Heart left ventricle (tissue), 16 donors: ENCODE measurements at regions of chr3 and their contacts with region 1.

Region 1: GRCh38 chr3:127822698-127823425 is 547 bp upstream of the MGLL start:
- DNase-seq: peak; percentile 64 to 87 (median 76)
- ATAC-seq: peak; percentile 62 to 89 (median 81)
- H3K4me3 ChIP-seq: peak overlapping the region; percentile 67 to 99 (median 86)
- H3K27ac ChIP-seq: peak overlapping the region; percentile 75 to 97 (median 92)
- H3K4me1 ChIP-seq: peaks cover 0 to 46% (median 29%) of the 10 kb centered on the region in 12 donors
- H3K27me3 ChIP-seq: no peaks in the 10 kb centered on the region
- CTCF ChIP-seq: peak in 6 of 12 donors; percentile 31 to 54 (median 38)
- POLR2A ChIP-seq: peak in 1 of 2 donors; percentile 53

Region 2: DNA sequence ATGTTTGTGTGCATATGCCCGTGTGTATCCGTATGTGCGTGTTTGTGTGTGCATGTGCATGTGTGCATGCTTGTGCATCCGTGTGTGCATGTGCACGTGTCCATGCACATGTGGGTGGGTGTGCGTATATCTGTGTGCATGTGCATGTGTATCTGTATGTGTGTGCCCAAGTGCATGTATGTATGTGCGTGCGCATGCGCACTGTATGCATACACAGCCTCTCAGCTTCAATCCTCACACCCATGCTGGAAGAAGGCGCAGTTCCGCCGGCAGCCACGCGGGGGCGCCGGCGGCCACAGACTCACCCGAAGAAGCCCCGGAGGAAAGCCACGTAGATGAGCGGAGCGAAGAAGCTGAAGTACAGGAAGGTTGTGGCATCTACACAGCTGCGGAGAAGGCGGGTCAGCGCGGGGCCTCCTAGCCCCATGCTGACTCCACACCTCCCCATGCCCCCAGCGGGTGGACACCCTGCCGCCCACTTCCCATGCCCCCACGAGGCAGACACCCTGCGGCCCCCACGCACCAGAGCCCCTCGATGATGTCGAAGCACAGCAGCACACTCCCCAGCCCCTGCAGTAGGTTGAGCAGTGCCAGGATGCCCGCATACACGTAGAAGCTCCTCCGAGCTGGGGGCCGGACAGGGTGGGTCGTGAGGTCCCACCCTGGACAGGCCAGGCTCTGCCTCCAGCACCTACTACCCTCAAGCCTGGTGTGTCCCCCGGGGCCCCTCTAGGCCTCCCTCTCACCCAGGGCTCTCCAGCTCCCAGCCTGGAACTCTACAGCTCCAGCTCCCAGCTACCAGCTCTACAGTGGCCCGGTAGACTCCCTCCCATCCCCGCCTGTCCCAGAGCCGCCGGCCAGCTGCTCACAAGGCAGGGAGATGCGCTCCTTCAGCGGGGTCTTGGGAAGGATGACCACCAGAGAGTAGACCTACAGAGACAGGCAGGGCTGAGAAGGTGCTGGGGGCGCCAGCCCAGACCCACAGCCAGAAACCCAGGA is 247.7 kb before region 1 on chr3:
- intact Hi-C with region 1: loop called in 1 of 10 experiments (anchors 10 kb)
- DNase-seq: peak; percentile 81 to 91 (median 84)
- ATAC-seq: peak; percentile 36 to 85 (median 78)
- H3K4me3 ChIP-seq: no peak overlapping the region
- H3K27ac ChIP-seq: no peak overlapping the region
- H3K4me1 ChIP-seq: peaks cover 0 to 22% (median 7%) of the 10 kb centered on the region in 12 donors
- H3K27me3 ChIP-seq: no peaks in the 10 kb centered on the region
- CTCF ChIP-seq: peak; percentile 95 to 98 (median 98)
- POLR2A ChIP-seq: no peak

Region 3: DNA sequence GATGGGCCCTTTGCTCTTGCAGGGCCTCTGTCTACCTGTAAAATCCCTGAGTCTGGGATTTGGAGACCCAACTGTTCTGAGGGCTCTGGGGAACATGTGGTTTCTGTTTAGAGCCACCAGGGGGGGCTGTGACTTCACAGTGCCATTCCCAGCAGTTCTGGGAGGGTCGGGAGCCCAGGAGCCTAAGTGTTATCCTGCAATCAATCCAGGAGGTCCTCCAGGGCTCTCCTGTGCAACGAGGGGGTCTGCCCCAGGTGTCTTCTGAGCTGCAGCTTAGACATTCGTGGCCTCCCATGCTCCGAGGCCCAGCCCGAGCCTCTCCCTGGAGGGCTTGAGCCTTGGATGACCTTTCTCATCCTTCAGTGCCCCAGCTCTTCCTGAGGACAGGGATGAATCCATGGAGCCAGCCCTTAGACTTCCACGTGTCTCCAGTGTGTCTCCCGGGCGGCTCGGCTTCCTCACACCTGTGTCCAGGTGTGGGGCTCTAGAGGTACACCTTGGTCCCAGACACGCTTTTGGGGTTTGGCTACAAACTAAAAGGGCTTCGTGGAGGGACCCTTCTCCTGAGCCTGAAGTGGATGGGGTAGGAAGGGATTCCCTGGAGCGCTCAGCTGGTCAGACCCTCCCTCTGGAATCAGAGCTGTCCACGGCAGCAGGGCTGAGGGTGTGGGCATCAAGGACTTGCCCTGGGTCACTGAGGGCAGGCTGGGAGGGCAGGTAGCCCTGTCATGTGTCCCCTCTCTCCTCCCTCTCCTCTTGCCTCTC is 170.4 kb before region 1 on chr3:
- intact Hi-C with region 1: loop called in 1 of 10 experiments (anchors 2 kb)
- DNase-seq: peak in 3 of 5 donors; percentile 55 to 61 (median 60)
- ATAC-seq: peak; percentile 64 to 89 (median 88)
- H3K4me3 ChIP-seq: peak overlapping the region in 1 of 12 donors; percentile 19
- H3K27ac ChIP-seq: no peak overlapping the region
- H3K4me1 ChIP-seq: peaks cover 0 to 12% (median 4%) of the 10 kb centered on the region in 12 donors
- H3K27me3 ChIP-seq: no peaks in the 10 kb centered on the region
- CTCF ChIP-seq: peak; percentile 83 to 96 (median 92)
- POLR2A ChIP-seq: no peak

Region 4: DNA sequence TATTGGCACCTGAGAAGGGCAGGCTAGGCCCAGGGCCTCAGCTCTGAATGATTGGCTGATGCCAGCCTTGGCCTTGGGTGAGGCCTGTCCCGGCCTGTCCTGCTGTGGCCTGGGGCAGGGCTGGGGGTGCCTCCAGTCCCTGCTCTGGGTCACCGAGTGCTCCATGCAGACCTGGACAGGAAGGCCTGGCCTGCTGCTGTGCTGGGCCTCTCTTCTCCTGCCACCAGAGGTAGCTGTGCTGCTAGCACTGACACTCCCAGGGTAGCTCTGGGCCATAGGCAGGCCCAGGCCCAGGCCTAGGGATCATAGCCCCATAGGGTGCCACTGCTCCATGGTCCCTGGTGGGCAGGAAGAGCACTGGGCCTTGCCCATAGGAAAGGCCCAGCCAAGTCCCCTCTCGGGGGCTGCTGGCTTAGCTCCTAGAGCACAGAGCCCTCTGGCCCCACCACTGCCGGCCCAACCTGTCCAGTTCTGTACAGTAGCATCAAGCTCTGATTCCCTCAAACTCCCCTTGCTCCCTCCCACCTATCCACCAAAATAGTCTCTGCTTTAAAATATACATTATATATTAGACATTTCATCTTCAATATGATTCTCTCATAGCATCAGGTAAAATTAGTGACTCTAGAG is 131.9 kb before region 1 on chr3:
- intact Hi-C with region 1: loop called in 9 of 10 experiments (anchors 2 to 5 kb)
- DNase-seq: peak in 2 of 5 donors; percentile 56 to 73
- ATAC-seq: peak; percentile 55 to 72 (median 64)
- H3K4me3 ChIP-seq: no peak overlapping the region
- H3K27ac ChIP-seq: peak overlapping the region in 11 of 12 donors; percentile 8 to 70 (median 52)
- H3K4me1 ChIP-seq: peaks cover 0 to 60% (median 21%) of the 10 kb centered on the region in 12 donors
- H3K27me3 ChIP-seq: no peaks in the 10 kb centered on the region
- CTCF ChIP-seq: peak; percentile 29 to 68 (median 46)
- POLR2A ChIP-seq: no peak

Region 5: GRCh38 chr3:127750226-127751031 is 72.4 kb before region 1 on chr3:
- intact Hi-C with region 1: loop called in 9 of 10 experiments (anchors 1 to 10 kb)
- DNase-seq: peak in 1 of 5 donors; percentile 23
- ATAC-seq: no peak
- H3K4me3 ChIP-seq: no peak overlapping the region
- H3K27ac ChIP-seq: peak overlapping the region; percentile 27 to 95 (median 86)
- H3K4me1 ChIP-seq: peaks cover 6 to 74% (median 56%) of the 10 kb centered on the region in 12 donors
- H3K27me3 ChIP-seq: no peaks in the 10 kb centered on the region
- CTCF ChIP-seq: no peak
- POLR2A ChIP-seq: no peak